ENCODE measurements at regions of chr1 and their contacts with region 1.

Region 1: GRCh38 chr1:113928941-113929749 is at the start of gene HIPK1:
- H3K4me3 Mint-ChIP-seq: peak within 1 kb of the TSS; percentile 97
- H3K27ac Mint-ChIP-seq: peak within 1 kb of the TSS; percentile 98
- H3K4me1 Mint-ChIP-seq: peaks cover 69% of the 10 kb centered on the region
- H3K27me3 Mint-ChIP-seq: no peaks in the 10 kb centered on the region

Region 2: GRCh38 chr1:113835642-113836307 is 93.4 kb before region 1 on chr1:
- intact Hi-C with region 1: loop called (anchors 5 kb)
- H3K4me3 Mint-ChIP-seq: no peak overlapping the region
- H3K27ac Mint-ChIP-seq: no peak overlapping the region
- H3K4me1 Mint-ChIP-seq: no peaks in the 10 kb centered on the region
- H3K27me3 Mint-ChIP-seq: no peaks in the 10 kb centered on the region

Region 3: DNA sequence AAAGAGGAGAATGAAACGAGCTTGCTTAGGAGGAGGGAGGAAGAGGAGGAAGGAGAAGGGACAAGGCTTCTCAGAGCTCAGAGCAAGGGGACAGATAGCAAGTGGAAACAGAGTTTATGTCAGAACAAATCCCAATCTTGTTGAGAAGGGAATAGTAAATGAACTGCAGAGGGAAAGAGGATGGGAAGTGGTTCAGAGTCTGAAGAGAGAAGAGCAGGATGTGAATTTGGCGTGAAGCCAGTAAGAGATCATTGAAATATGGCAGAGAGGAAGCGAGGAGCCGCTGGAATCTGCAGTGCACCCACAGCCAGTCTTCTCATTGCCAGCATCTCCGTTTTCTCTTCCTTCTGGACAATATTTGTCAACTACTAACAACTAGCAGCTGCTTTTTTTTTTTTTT is 69.2 kb after region 1 on chr1:
- intact Hi-C with region 1: no loop called
- H3K4me3 Mint-ChIP-seq: no peak overlapping the region
- H3K27ac Mint-ChIP-seq: no peak overlapping the region
- H3K4me1 Mint-ChIP-seq: peaks cover 22% of the 10 kb centered on the region
- H3K27me3 Mint-ChIP-seq: peaks cover 6% of the 10 kb centered on the region